ENCODE measurements at regions of chr17 and their contacts with region 1.

Region 1: GRCh38 chr17:979538-980405 is at the start of gene NXN:
- DNase-seq: peak; percentile 93 to 94 (median 94)
- ATAC-seq: peak; percentile 87 to 96 (median 92)
- H3K4me3 ChIP-seq: peak within 1 kb of the TSS; percentile 61 to 67 (median 62)
- H3K27ac ChIP-seq: peak within 1 kb of the TSS; percentile 58 to 69 (median 59)
- H3K4me1 ChIP-seq: peaks cover 0 to 23% (median 4%) of the 10 kb centered on the region in 4 donors
- H3K27me3 ChIP-seq: no peaks in the 10 kb centered on the region
- CTCF ChIP-seq: peak in 3 of 4 donors; percentile 8 to 23 (median 12)
- POLR2A ChIP-seq: peak; percentile 58
- total RNA-seq, gene NXN: 2.7 to 9.5 (median 8.0) TPM

Region 2: DNA sequence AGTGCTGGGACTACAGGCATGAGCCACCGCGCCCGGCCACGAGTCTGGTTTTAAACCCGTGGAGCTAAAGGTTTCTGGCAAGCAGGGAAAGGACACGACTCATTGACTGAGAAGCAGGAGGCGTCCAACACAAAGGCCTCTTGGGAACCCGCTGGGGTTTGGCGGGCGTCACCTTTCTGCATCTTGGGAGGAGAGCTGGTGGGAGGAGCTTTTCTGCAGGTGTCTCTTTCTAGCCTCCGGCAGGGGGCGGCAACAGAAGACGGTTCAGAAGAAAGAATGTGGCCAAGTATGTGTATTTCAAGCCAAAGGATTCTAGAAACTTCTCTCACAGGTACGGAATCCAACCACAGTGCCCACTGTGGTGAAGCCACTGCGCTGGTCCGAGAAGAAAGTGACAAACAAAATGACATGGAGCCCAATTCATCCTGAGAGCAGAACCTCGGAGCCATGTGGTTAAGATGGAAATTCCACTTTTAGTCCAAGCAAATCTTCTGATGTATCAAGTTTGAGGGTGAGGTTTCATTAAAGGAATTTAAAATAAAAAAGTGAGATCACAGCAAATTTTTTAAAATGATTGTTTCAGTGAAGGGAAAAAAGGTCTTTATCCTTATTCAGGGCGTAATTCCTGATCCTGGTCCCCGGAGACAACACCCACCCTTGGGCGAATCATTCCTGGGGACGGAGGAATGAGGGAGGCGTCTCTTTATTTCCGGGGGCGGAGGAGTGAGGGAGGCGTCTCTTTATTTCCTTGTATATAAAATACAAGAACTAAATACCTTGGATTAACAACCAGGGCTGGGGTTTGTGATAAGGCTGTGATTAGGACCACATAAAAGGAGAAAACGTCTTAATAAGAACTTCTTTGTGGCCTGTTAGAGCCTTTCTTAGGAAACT is 100.0 kb before region 1 on chr17:
- intact Hi-C with region 1: loop called in 1 of 2 experiments (anchors 10 kb)
- DNase-seq: peak; percentile 74 to 79 (median 78)
- ATAC-seq: peak; percentile 61 to 75 (median 71)
- H3K4me3 ChIP-seq: no peak overlapping the region
- H3K27ac ChIP-seq: peak overlapping the region; percentile 41 to 71 (median 61)
- H3K4me1 ChIP-seq: peaks cover 0 to 20% (median 5%) of the 10 kb centered on the region in 4 donors
- H3K27me3 ChIP-seq: no peaks in the 10 kb centered on the region
- CTCF ChIP-seq: peak; percentile 48 to 70 (median 61)
- POLR2A ChIP-seq: no peak

Region 3: GRCh38 chr17:1067282-1067956 is 87.6 kb after region 1 on chr17:
- intact Hi-C with region 1: no loop called
- DNase-seq: peak in 1 of 3 donors; percentile 24
- ATAC-seq: no peak
- H3K4me3 ChIP-seq: no peak overlapping the region
- H3K27ac ChIP-seq: no peak overlapping the region
- H3K4me1 ChIP-seq: no peaks in the 10 kb centered on the region
- H3K27me3 ChIP-seq: no peaks in the 10 kb centered on the region
- CTCF ChIP-seq: no peak
- POLR2A ChIP-seq: no peak

Region 4: DNA sequence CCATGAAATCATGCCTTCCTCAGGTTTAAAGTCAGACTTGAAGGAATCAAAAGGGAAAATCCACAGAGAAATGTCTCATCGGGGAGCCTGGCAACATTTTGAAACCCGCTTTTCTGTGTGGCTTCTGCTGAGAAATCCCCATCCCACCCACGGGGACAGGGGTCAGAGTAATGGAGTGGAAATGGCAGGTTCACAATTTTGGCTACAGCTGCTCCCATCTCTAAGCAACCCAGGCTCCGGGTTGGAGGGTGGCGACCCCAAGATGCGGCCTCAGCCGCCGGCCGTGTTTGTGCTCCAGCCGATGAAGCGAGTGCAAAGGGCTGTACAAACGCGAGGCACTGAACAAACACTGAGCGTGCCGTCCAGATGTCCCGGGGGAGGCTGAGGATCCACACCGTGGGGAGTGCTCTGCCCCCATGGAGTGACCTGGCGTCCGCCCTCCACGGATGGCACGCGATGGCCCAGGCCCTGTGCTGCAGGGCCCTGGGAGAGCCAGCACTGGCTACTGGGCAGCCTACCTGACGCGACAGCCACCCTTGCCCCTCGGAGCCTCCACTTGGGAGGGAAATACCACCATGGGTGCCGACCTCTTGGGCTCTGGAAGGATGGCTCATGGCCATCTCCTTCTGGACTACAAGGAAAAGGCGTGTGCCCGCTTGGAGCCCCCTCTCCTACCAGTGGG is 626.7 kb after region 1 on chr17:
- intact Hi-C with region 1: no loop called
- DNase-seq: no peak
- ATAC-seq: peak in 3 of 4 donors; percentile 9 to 14 (median 13)
- H3K4me3 ChIP-seq: no peak overlapping the region
- H3K27ac ChIP-seq: peak overlapping the region in 1 of 3 donors; percentile 57
- H3K4me1 ChIP-seq: no peaks in the 10 kb centered on the region
- H3K27me3 ChIP-seq: no peaks in the 10 kb centered on the region
- CTCF ChIP-seq: no peak
- POLR2A ChIP-seq: no peak

Measured in right lobe of liver (tissue), 6 donors.